Dendritic cell treated with granulocyte-macrophage colony-stimulating factor and Interleukin-4, amounts not matched to agents 40 ng/mL and 50 ng/mL, for 4 days (primary cell): ENCODE measurements at regions of chr6 and their contacts with region 1.

Region 1: GRCh38 chr6:71349395-71349794 is 60.8 kb downstream of the OGFRL1 start:
- H3K4me3 Mint-ChIP-seq: no peak overlapping the region
- H3K27ac Mint-ChIP-seq: no peak overlapping the region
- H3K4me1 Mint-ChIP-seq: peaks cover 27% of the 10 kb centered on the region
- H3K27me3 Mint-ChIP-seq: peaks cover 2% of the 10 kb centered on the region

Region 2: GRCh38 chr6:71190809-71191208 is 158.6 kb before region 1 on chr6:
- intact Hi-C with region 1: loop called (anchors 1 kb)
- H3K4me3 Mint-ChIP-seq: peak overlapping the region; percentile 14
- H3K27ac Mint-ChIP-seq: peak overlapping the region; percentile 80
- H3K4me1 Mint-ChIP-seq: peaks cover 26% of the 10 kb centered on the region
- H3K27me3 Mint-ChIP-seq: no peaks in the 10 kb centered on the region